ENCODE measurements at regions of chr16 and their contacts with region 1.

Region 1: DNA sequence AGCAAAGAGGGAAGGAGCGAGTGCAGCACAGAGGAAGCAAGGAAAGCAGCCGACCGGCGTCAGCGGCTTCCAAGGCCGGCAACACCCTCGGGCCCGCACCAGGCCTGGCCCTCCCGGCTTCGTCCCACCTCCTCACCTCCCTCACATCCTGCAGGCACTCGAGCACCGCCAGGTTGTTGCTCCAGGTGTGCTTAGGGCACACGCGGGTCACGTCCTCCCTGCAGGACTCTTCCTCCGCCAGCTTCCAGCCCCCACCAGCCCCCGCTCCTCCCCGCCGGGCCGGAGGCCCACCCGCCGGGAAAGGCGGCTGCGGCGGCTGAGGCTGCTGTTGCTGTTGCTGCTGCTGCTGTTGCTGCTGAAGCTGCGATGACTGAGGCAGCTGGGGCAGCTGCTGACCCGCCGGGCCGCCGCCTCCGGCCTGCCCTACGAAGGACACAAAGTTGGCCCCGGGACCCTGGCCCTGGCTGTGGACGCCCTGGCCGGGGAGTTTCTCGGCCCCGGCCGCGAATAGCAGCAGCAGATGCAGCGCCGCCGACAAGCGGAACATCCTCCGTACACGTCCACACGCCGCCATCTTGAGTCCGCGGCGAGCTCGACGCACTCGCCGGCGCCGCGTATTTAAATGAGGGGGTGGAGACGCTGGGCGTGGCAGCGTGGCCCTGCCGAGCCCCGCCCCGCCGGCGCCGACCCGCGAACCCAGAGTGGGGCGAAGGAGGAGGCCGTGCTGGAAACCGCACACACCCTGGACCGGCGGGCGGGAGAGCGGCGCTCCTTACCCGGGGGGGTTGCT is at the start of gene GLG1:
- DNase-seq: peak; percentile 92 to 96
- ATAC-seq: peak; percentile 95 to 97 (median 96)
- H3K4me3 ChIP-seq: peak within 1 kb of the TSS; percentile 75
- H3K27ac ChIP-seq: peak within 1 kb of the TSS; percentile 93
- H3K4me1 ChIP-seq: peaks cover 44% of the 10 kb centered on the region
- H3K27me3 ChIP-seq: no peaks in the 10 kb centered on the region
- CTCF ChIP-seq: no peak
- total RNA-seq, gene GLG1: 60.1 to 107 (median 76.5) TPM

Region 2: DNA sequence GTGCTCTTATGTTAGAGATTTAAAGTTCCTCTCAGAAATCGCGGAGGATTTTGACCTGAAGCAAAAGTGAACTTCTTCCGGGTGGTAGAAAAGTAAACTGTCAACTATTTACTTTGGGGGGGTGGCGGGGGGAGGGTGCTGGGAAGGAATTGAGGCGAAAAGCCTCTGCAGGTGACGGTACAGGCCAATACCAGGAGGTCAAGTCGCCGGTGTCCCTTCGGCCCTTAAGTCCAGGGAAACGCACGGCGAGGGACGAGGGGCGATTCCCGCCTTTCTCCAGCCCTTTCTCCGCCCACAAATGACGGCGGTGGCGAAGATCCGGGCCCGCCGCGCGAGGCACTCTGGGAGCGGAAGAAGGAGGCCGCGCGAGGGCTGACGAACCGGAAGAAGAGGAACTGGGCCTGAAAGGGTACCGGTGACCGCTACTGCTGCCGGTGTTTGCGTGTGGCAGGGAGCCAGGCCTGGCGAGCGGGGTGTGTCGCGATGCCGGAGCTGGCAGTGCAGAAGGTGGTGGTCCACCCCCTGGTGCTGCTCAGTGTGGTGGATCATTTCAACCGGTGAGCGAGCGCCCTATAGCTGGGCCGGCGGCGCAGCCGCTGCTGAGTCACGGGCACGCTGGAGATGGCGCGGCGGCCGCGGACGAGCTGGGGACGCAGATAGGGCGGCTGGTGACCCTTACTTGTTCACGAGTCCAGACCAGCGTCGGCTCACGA is 310.1 kb before region 1 on chr16 and contains the start of gene PSMD7:
- intact Hi-C with region 1: loop called in 1 of 2 experiments (anchors 5 kb)
- DNase-seq: peak; percentile 94 to 96
- ATAC-seq: peak; percentile 96 to 98 (median 98)
- H3K4me3 ChIP-seq: peak within 1 kb of the TSS; percentile 85
- H3K27ac ChIP-seq: peak within 1 kb of the TSS; percentile 97
- H3K4me1 ChIP-seq: peaks cover 31% of the 10 kb centered on the region
- H3K27me3 ChIP-seq: no peaks in the 10 kb centered on the region
- CTCF ChIP-seq: no peak
- total RNA-seq, gene PSMD7: 122 to 230 (median 191) TPM

Region 3: DNA sequence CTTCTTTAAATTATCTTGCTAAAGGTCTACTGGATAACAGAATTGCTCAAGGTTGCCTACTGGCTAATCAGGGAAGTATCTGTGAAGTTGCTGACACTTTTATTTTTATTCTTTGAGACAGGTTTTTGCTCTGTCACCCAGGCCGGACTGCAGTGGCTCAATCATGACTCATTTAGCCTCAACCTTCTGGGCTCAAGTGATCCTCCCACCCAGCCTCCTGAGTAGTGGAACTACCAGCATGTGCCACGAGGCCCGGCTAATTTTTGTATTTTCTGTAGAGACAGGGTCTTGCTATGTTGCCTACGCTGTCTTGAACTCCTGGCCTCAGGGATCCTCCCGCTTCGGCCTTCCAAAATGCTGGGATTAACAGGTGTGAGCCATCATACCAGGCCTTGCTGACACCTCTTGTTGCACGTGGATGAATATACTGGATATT is 42.9 kb before region 1 on chr16:
- intact Hi-C with region 1: no loop called
- DNase-seq: peak; percentile 27 to 64
- ATAC-seq: peak; percentile 71 to 95 (median 92)
- H3K4me3 ChIP-seq: no peak overlapping the region
- H3K27ac ChIP-seq: peak overlapping the region; percentile 46
- H3K4me1 ChIP-seq: peaks cover 41% of the 10 kb centered on the region
- H3K27me3 ChIP-seq: no peaks in the 10 kb centered on the region
- CTCF ChIP-seq: no peak

Region 4: GRCh38 chr16:74666425-74667254 is 59.9 kb after region 1 on chr16 and contains the start of gene RFWD3:
- intact Hi-C with region 1: loop called in 1 of 2 experiments (anchors 10 kb)
- DNase-seq: peak; percentile 95 to 98
- ATAC-seq: peak; percentile 100
- H3K4me3 ChIP-seq: peak within 1 kb of the TSS; percentile 78
- H3K27ac ChIP-seq: peak within 1 kb of the TSS; percentile 85
- H3K4me1 ChIP-seq: peaks cover 3% of the 10 kb centered on the region
- H3K27me3 ChIP-seq: no peaks in the 10 kb centered on the region
- CTCF ChIP-seq: no peak
- total RNA-seq, gene RFWD3: 4.0 to 8.2 (median 7.2) TPM